H1 (cell line): ENCODE measurements at regions of chr3 and their contacts with region 1.

Region 1: DNA sequence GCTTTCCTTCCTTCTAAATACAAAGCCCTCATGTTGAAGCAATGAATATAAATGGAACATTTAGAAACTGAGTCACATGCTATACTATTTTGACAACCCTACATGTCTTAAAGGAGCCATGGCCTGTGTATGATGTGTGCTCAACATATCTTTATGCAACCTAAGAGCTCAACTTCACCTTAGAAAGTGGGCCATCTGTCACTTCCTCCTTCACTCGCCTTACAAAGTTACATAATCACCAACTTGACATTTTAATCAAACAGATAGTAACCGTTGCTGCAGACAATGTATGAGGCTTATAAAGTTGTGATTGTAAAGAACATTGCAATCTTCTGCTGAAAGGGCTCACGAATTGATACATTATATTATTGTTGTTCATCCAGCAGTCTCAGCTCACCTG is 163.6 kb downstream of the SERPINI1 start:
- DNase-seq: no peak
- H3K4me3 ChIP-seq: no peak overlapping the region
- H3K27ac ChIP-seq: no peak overlapping the region
- H3K4me1 ChIP-seq: peaks cover 0 to 5% (median 0%) of the 10 kb centered on the region in 4 experiments; a peak in 1 of 7 replicates
- H3K27me3 ChIP-seq: no peaks in the 10 kb centered on the region
- CTCF ChIP-seq: no peak
- EP300 ChIP-seq: no peak
- POLR2A ChIP-seq: no peak
- RAD21 ChIP-seq: no peak

Region 2: GRCh38 chr3:167872941-167873340 is 26.2 kb before region 1 on chr3:
- CTCF ChIA-PET with region 1: no interaction called
- POLR2A ChIA-PET with region 1: no interaction called
- DNase-seq: no peak
- H3K4me3 ChIP-seq: no peak overlapping the region
- H3K27ac ChIP-seq: no peak overlapping the region
- H3K4me1 ChIP-seq: no peaks in the 10 kb centered on the region
- H3K27me3 ChIP-seq: no peaks in the 10 kb centered on the region
- CTCF ChIP-seq: peak in 1 of 3 experiments; percentile 27; a peak in 1 of 4 replicates
- EP300 ChIP-seq: no peak
- POLR2A ChIP-seq: no peak
- RAD21 ChIP-seq: no peak

Region 3: DNA sequence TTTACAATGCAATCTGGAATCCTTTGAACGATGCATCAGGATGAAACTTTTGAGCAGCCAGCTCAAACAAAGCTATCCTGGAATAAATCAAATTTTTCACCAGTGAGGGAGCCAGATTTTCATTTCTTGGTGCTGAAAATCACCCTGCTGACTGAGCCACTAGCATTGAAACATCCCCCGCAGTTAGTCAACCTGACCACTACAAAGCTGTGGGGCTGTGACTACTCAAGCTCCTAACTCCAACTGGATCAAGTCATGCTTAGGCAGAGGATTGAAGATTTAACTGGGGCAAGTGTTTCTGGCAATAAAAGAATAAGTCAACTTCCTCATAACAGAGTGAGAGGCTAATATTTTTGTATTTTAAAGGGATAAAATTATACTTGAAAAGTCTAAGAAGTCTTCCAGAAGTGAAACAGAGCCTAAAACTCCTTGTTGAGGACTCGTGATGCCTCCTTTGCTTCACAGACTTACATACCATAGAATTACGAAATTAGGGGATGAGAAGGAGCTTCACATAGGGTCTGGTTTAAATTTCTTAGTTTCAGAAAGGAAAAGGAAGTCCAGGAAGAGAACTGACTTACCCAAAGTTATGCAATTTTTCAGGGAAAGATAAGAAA is 14.2 kb after region 1 on chr3:
- CTCF ChIA-PET with region 1: interaction called, 10 read pairs
- POLR2A ChIA-PET with region 1: no interaction called
- DNase-seq: no peak
- H3K4me3 ChIP-seq: no peak overlapping the region
- H3K27ac ChIP-seq: no peak overlapping the region
- H3K4me1 ChIP-seq: no peaks in the 10 kb centered on the region
- H3K27me3 ChIP-seq: no peaks in the 10 kb centered on the region
- CTCF ChIP-seq: peak; percentile 18 to 57 (median 34); a peak in 3 of 4 replicates
- EP300 ChIP-seq: no peak
- POLR2A ChIP-seq: no peak
- RAD21 ChIP-seq: peak; percentile 31 to 49; a peak in 3 of 4 replicates

Region 4: DNA sequence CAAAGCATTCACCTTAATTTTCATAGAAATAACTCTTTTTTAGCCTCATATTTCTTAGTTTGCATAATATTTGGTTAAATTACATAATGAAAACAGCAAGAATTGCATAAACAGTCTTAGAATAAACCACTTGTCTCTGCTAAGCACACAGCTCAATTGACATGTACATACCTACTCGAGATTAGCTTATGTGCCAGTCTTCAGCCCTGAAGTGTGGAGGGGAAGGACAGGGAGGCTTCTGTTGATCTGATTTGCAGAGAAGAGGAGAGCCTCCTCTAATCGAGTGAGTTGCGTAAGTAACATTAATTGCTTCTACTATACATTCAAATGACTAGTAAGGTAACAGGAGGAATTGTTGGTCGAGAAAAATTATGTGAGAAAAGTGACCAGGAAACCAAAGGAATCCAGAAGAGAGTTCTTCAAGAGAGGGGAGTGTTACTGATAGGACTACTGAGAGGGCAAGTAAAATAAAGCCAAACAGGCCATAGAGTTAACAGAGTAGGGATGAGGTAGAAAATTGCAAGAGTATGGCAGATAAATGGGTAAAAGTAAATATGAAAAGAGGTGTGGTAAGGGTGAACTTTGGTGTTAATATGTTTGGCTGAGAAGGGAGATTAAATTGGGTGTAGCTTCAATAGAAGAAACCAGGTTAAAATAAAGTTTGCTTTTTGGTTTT is 203.8 kb after region 1 on chr3:
- CTCF ChIA-PET with region 1: no interaction called
- POLR2A ChIA-PET with region 1: no interaction called
- DNase-seq: no peak
- H3K4me3 ChIP-seq: no peak overlapping the region
- H3K27ac ChIP-seq: no peak overlapping the region
- H3K4me1 ChIP-seq: no peaks in the 10 kb centered on the region
- H3K27me3 ChIP-seq: no peaks in the 10 kb centered on the region
- CTCF ChIP-seq: no peak
- EP300 ChIP-seq: no peak
- POLR2A ChIP-seq: no peak
- RAD21 ChIP-seq: no peak